Mammary epithelial cell (primary cell): ENCODE measurements at regions of chr3 and their contacts with region 1.

Region 1: GRCh38 chr3:184656829-184657681 is 54.8 kb downstream of the MAGEF1 start:
- DNase-seq: peak; percentile 98
- H3K4me3 ChIP-seq: no peak overlapping the region
- H3K27ac ChIP-seq: peak overlapping the region; percentile 93
- H3K4me1 ChIP-seq: peaks cover 50% of the 10 kb centered on the region
- H3K27me3 ChIP-seq: no peaks in the 10 kb centered on the region
- CTCF ChIP-seq: no peak

Region 2: DNA sequence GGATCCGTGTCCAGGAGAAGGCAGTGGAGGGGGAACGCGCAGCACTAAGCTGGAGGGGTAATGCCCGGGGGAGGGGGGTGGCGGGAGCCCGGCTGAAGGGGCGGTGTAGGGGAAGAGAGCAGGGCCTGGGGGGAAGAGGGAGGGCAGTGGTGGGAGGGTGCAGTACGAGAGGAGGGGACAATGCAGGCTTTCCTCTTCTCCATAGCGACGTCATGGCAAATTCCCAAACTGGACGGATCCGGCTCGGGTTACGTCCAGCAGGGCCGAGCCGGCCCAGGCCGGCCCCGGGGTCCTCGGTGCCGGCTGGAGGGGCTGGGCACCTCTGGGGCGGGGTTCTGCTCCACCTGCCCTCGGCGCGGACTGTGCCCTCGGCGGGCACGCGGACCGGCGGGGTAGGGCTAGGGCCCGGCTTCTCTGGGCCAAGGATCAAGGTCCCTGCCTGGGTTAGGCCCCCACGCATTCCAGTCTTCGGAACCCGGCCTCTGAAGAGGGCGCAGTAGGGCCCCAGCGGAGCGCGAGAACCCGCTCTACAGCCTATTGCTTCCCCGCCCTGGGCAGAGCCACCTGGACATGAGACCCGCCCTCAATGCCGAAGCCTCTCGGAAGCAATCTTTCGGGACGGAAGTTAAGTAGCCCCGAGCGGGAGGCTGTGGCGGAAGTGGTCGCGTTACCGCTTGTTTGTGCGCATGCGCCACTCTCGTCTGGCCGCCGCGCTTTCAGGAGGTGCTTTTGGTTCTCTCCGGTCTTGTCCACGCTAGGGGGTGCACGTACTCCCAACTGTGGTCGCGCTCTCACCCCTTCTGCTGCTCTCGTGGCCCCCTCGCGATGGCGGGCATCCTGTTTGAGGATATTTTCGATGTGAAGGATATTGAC is 294.2 kb before region 1 on chr3:
- CTCF ChIA-PET with region 1: no interaction called
- dilution Hi-C with region 1: no loop called
- in situ Hi-C with region 1: no loop called
- intact Hi-C with region 1: no loop called
- DNase-seq: peak; percentile 98
- H3K4me3 ChIP-seq: peak overlapping the region; percentile 75 to 88 (median 85)
- H3K27ac ChIP-seq: peak overlapping the region; percentile 80
- H3K4me1 ChIP-seq: peaks cover 20% of the 10 kb centered on the region
- H3K27me3 ChIP-seq: no peaks in the 10 kb centered on the region
- CTCF ChIP-seq: peak; percentile 27 to 58

Region 3: DNA sequence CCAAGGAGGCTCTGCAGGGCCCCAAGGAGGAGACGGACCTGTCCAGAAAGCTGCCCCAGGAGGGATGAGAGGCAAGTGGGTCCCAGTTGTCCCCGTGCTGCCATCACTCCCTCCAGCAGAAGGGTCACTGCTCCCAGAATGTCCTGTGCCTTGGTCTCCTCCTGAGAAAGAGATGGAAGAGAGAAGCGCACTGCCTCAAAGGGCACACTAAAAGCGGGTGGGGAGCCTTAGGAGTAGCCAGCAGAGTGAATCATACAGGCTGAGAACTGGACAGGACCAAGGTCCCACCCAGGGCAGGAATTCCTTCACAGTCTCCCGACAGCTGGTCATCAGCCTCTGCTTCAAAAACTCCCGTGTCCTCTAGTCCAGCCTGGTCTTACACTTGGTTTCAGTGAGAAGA is 283.6 kb before region 1 on chr3:
- CTCF ChIA-PET with region 1: no interaction called
- dilution Hi-C with region 1: no loop called
- in situ Hi-C with region 1: no loop called
- intact Hi-C with region 1: no loop called
- DNase-seq: no peak
- H3K4me3 ChIP-seq: no peak overlapping the region
- H3K27ac ChIP-seq: no peak overlapping the region
- H3K4me1 ChIP-seq: peaks cover 4% of the 10 kb centered on the region
- H3K27me3 ChIP-seq: peaks cover 3% of the 10 kb centered on the region
- CTCF ChIP-seq: no peak

Region 4: GRCh38 chr3:184568924-184569829 is 87.9 kb before region 1 on chr3:
- CTCF ChIA-PET with region 1: no interaction called
- dilution Hi-C with region 1: no loop called
- in situ Hi-C with region 1: loop called in 1 of 2 experiments (anchors 5 kb)
- intact Hi-C with region 1: no loop called
- DNase-seq: peak; percentile 82
- H3K4me3 ChIP-seq: peak overlapping the region; percentile 27 to 47 (median 44)
- H3K27ac ChIP-seq: no peak overlapping the region
- H3K4me1 ChIP-seq: peaks cover 55% of the 10 kb centered on the region
- H3K27me3 ChIP-seq: no peaks in the 10 kb centered on the region
- CTCF ChIP-seq: no peak

Region 5: DNA sequence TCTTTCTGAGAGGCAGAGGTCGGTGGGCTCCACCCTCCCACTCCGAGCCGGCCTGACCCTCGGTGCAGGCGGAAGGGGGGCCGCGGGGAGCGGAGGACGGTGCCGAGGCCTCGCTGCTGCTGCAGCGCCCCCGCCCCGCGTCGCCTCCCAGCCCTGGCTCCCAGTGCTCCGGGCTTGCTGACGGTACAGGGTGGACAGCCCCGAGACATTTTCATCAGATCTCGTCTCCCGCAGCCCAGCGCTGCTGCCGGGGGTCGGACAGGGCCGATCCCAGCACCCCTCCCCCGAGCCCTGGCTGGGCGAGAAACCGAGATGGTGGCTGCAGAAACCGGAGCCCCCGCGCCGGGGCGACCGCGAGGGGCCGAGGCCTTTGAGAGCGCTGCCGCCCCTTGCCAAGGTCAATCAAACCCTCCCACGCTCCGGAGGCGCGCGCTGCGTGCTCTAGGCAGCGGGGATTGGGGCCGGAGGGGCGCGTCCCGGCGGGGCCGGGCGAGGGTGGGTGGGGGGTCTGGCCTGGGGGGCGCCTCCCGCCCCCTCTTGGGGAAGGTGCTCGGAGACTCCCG is 52.9 kb before region 1 on chr3:
- CTCF ChIA-PET with region 1: no interaction called
- dilution Hi-C with region 1: no loop called
- in situ Hi-C with region 1: loop called in 1 of 2 experiments (anchors 5 kb)
- intact Hi-C with region 1: loop called (anchors 2 kb)
- DNase-seq: no peak
- H3K4me3 ChIP-seq: no peak overlapping the region
- H3K27ac ChIP-seq: no peak overlapping the region
- H3K4me1 ChIP-seq: peaks cover 28% of the 10 kb centered on the region
- H3K27me3 ChIP-seq: no peaks in the 10 kb centered on the region
- CTCF ChIP-seq: no peak

Region 6: DNA sequence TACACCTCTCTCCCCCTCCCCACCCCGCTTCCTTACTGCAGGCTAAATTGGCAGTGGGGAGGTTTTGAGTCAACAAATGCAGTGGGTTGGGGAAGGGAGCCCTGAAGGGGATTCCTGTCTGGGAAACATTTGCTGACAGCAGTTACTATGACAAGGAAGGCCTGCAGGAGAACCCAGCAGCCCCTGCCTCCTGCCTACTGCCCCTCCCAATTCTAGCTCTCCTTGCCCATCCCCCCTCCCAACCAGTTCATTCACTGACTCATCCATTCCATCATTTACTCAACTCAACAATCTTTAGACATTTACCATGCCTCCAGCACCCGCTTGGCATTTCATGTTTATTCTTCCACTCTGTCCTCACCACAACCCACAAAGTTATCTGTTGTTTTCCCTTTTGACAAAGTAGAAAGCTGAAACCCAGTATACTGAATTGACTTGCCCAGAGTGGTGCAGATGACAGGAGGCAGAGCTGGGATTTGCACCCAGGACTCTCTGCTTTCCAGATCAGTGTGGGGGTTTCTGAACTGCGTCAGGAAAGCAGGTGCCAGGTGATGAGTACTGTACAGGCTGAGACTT is 20.2 kb before region 1 on chr3:
- CTCF ChIA-PET with region 1: no interaction called
- dilution Hi-C with region 1: no loop called
- in situ Hi-C with region 1: no loop called
- intact Hi-C with region 1: loop called (anchors 2 kb)
- DNase-seq: peak; percentile 87
- H3K4me3 ChIP-seq: no peak overlapping the region
- H3K27ac ChIP-seq: no peak overlapping the region
- H3K4me1 ChIP-seq: peaks cover 15% of the 10 kb centered on the region
- H3K27me3 ChIP-seq: no peaks in the 10 kb centered on the region
- CTCF ChIP-seq: no peak

Region 7: DNA sequence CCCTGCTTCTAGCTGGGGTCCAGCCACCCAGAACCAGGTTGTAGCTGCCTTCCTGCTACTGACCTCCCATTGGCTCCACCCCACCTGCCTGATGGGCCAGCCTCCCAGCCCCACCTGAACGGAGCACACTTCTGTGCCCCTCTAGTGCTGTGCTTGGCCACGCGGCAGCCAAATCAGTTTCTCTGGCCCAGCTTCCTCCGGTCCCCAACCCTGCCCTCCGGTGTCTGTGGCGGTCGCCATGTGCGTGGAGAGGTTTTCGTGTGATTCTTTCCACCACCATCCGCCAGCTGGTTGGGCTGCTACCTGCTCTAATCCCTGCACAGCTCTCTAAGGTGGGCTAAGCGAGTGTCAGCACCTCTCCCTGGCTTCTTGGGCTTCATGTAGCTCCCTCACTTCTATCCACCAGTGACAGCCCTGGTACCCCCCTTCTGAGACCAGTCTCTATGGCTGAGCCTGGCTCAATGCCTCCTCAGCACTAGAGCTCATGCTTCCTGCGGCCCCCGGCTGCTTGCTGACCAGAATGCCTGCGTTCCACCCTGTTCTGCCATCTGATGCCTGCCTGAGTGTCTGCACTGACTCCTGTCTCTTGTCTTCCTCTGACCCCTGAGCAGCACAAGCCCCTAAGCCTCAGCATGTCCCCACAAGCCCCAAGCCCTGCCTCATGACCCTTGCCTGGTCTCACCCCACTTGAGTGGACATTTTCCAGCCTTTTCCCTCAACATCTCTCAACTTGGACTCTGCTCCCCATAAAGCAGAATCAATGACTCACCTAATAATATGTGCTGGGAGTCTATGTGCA is 78.0 kb after region 1 on chr3:
- CTCF ChIA-PET with region 1: no interaction called
- dilution Hi-C with region 1: loop called (anchors 5 kb)
- in situ Hi-C with region 1: no loop called
- intact Hi-C with region 1: loop called (anchors 10 kb)
- DNase-seq: no peak
- H3K4me3 ChIP-seq: no peak overlapping the region
- H3K27ac ChIP-seq: no peak overlapping the region
- H3K4me1 ChIP-seq: peaks cover 43% of the 10 kb centered on the region
- H3K27me3 ChIP-seq: no peaks in the 10 kb centered on the region
- CTCF ChIP-seq: no peak

Region 8: GRCh38 chr3:184765730-184766074 is 108.6 kb after region 1 on chr3:
- CTCF ChIA-PET with region 1: no interaction called
- dilution Hi-C with region 1: loop called (anchors 5 kb)
- in situ Hi-C with region 1: loop called in 1 of 2 experiments (anchors 10 kb)
- intact Hi-C with region 1: loop called (anchors 1 kb)
- DNase-seq: peak; percentile 95
- H3K4me3 ChIP-seq: no peak overlapping the region
- H3K27ac ChIP-seq: peak overlapping the region; percentile 99
- H3K4me1 ChIP-seq: peaks cover 26% of the 10 kb centered on the region
- H3K27me3 ChIP-seq: no peaks in the 10 kb centered on the region
- CTCF ChIP-seq: no peak